T-cell (primary cell): ENCODE measurements at regions of chr7 and their contacts with region 1.

Region 1: DNA sequence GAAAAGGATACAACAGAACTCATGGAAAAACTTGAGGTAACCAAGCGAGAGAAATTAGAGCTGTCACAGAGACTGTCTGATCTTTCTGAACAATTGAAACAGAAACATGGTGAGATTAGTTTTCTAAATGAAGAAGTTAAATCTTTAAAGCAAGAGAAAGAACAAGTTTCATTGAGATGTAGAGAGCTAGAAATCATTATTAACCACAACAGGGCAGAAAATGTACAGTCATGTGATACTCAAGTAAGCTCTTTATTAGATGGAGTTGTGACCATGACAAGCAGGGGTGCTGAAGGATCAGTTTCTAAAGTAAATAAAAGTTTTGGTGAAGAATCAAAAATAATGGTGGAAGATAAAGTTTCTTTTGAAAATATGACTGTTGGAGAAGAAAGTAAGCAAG is 62.1 kb downstream of the AKAP9 start:
- DNase-seq: no peak
- ATAC-seq: no peak
- H3K4me3 ChIP-seq: no peak overlapping the region
- H3K4me3 Mint-ChIP-seq: no peak overlapping the region
- H3K27ac ChIP-seq: no peak overlapping the region
- H3K27ac Mint-ChIP-seq: no peak overlapping the region
- H3K4me1 ChIP-seq: no peaks in the 10 kb centered on the region
- H3K4me1 Mint-ChIP-seq: no peaks in the 10 kb centered on the region
- H3K27me3 ChIP-seq: no peaks in the 10 kb centered on the region
- H3K27me3 Mint-ChIP-seq: no peaks in the 10 kb centered on the region

Region 2: DNA sequence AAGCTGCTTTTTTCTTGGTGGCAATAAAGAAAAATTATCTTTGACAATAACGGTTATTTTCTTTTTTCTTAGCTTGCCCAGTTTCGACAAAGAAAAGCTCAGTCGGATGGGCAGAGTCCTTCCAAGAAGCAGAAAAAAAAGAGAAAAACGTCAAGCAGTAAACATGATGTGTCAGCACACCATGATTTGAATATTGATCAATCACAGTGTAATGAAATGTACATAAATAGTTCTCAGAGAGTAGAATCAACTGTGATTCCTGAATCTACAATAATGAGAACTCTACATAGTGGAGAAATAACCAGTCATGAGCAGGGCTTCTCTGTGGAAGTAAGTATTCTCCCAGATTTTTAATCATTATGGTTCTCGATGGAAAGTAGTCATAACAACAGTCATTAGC is 29.1 kb before region 1 on chr7:
- CTCF ChIA-PET with region 1: no interaction called
- POLR2A ChIA-PET with region 1: no interaction called
- DNase-seq: no peak
- ATAC-seq: no peak
- H3K4me3 ChIP-seq: no peak overlapping the region
- H3K4me3 Mint-ChIP-seq: no peak overlapping the region
- H3K27ac ChIP-seq: no peak overlapping the region
- H3K27ac Mint-ChIP-seq: no peak overlapping the region
- H3K4me1 ChIP-seq: peaks cover 0 to 4% of the 10 kb centered on the region in 2 experiments
- H3K4me1 Mint-ChIP-seq: peaks cover 29 to 43% (median 31%) of the 10 kb centered on the region in 3 donors
- H3K27me3 ChIP-seq: no peaks in the 10 kb centered on the region
- H3K27me3 Mint-ChIP-seq: no peaks in the 10 kb centered on the region

Region 3: GRCh38 chr7:92178927-92179924 is 176.5 kb after region 1 on chr7 and contains the start of gene LRRD1:
- CTCF ChIA-PET with region 1: interaction called in 1 of 2 experiments, 13 read pairs
- POLR2A ChIA-PET with region 1: no interaction called
- DNase-seq: peak; percentile 69 to 93 (median 82)
- ATAC-seq: peak; percentile 98 to 100 (median 100)
- H3K4me3 ChIP-seq: peak within 1 kb of the TSS; percentile 50 to 84
- H3K4me3 Mint-ChIP-seq: peak within 1 kb of the TSS; percentile 77 to 80 (median 79)
- H3K27ac ChIP-seq: no peak within 1 kb of the TSS
- H3K27ac Mint-ChIP-seq: peak within 1 kb of the TSS in 1 of 2 donors; percentile 66
- H3K4me1 ChIP-seq: peaks cover 2 to 10% of the 10 kb centered on the region in 2 experiments
- H3K4me1 Mint-ChIP-seq: peaks cover 8 to 12% (median 9%) of the 10 kb centered on the region in 3 donors
- H3K27me3 ChIP-seq: peaks cover 0 to 11% of the 10 kb centered on the region in 2 experiments
- H3K27me3 Mint-ChIP-seq: peaks cover 0 to 2% of the 10 kb centered on the region in 2 donors
- total RNA-seq, gene LRRD1: not detected